ENCODE measurements at regions of chr6 and their contacts with region 1.

Region 1: DNA sequence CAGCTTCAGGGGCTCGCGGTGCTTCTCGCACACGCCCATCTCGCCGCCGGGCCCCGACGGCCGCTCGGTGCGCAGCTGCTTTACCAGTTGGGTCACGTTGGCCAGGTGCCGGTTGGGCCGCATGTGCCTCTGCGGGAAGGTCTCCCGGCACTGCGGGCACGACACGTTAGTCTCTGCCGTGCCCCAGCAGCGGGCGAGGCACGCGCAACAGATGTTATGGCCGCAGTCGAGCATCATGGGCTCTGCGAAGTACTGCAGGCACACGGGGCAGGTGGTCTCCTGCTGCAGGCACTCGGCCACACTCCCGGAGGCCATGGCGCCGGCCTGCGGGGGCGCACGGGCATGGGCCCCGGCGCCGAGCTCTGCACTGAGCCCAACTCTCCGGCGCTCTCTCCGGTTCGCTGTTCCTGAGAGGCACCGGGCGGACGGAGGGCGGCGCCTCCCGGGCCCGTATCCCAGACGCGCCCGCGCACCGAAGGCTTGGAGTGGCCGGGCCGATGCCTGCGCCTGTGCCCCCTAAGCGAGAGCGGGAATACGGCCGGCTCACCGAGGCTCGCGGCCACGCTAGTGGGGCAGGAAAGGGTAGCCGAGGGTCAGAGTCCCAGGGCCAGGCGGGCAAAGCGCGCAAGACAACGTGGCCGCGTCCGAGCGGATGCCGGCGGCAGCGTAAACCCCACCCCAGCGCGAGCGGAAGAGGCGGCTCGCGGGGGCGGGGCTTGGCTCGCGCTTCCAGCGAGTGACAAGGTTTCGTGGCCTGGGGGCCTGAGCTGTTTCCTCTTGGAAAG is at the start of gene TRIM27:
- DNase-seq: peak; percentile 89 to 97 (median 94)
- ATAC-seq: peak; percentile 88 to 97 (median 91)
- H3K4me3 ChIP-seq: peak within 1 kb of the TSS; percentile 73 to 99 (median 84)
- H3K27ac ChIP-seq: peak within 1 kb of the TSS; percentile 95 to 98 (median 98)
- H3K4me1 ChIP-seq: peaks cover 11 to 17% (median 12%) of the 10 kb centered on the region in 3 donors
- H3K27me3 ChIP-seq: no peaks in the 10 kb centered on the region
- CTCF ChIP-seq: no peak
- total RNA-seq, gene TRIM27: 24.1 to 33.6 (median 28.4) TPM

Region 2: GRCh38 chr6:28940858-28941680 is 17.6 kb after region 1 on chr6:
- intact Hi-C with region 1: loop called in 1 of 3 experiments (anchors 2 kb)
- DNase-seq: peak in 4 of 6 donors; percentile 37 to 73 (median 61)
- ATAC-seq: peak; percentile 71 to 84 (median 79)
- H3K4me3 ChIP-seq: peak overlapping the region in 3 of 4 donors; percentile 17 to 52 (median 31)
- H3K27ac ChIP-seq: peak overlapping the region in 3 of 4 donors; percentile 44 to 70 (median 61)
- H3K4me1 ChIP-seq: peaks cover 0 to 12% (median 0%) of the 10 kb centered on the region in 3 donors
- H3K27me3 ChIP-seq: no peaks in the 10 kb centered on the region
- CTCF ChIP-seq: no peak

Measured in pancreas (tissue), 10 donors.